ENCODE measurements at regions of chr12 and their contacts with region 1.

Region 1: DNA sequence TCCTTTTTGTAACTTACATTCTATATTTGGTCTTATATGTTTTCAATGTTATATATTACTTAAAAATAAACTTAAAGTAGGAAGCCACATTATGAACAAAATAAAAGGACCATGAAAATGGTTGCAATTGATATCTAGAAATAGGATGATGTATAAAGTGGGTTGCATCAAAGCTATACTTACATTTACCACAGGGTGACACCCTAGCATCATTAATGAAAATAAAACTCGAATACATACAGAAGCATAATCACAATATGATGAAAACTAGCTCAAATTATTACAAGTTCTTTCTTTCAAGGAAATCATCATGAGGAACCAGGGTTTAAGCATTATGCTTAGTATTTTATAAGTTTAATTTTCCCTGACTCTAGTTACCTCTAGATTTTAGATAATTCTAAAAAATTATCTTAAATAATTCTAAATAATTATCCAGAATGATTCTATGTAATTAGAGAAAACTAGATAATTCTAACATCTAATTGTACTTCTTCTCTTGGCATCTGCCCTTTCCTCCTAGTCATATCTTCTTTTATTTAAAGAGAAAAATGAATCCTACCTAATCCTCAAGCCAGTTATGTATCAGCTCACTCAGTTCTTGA is 31.2 kb downstream of the TAS2R7 start:
- DNase-seq: peak; percentile 56
- ATAC-seq: peak; percentile 46; the same call in 1 of the 2 replicates
- H3K4me3 ChIP-seq: no peak overlapping the region
- H3K27ac ChIP-seq: no peak overlapping the region
- H3K4me1 ChIP-seq: no peaks in the 10 kb centered on the region
- H3K27me3 ChIP-seq: peaks cover 71% of the 10 kb centered on the region
- CTCF ChIP-seq: peak; percentile 69

Region 2: DNA sequence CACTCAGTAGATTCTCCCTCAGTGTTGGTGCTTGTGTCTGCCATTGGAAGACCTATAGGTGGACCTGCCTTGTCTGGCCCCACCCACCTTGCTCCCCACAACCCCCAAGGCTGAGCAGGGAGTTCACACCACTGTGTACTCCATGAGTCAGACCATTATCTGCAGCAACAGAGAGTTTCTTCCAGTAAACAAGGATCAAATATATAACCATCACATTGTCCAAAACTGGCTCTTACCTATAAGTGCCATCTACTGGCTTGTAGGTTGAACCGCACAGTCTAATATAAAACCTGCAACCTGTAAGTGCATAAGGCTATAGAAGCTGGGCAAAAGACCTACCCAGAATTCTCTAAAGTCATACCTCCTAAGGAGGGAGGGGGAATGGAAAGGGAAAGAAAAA is 130.2 kb after region 1 on chr12:
- CTCF ChIA-PET with region 1: no interaction called
- POLR2A ChIA-PET with region 1: no interaction called
- intact Hi-C with region 1: loop called (anchors 2 kb)
- DNase-seq: peak; percentile 45
- ATAC-seq: peak; percentile 77
- H3K4me3 ChIP-seq: no peak overlapping the region
- H3K27ac ChIP-seq: no peak overlapping the region
- H3K4me1 ChIP-seq: no peaks in the 10 kb centered on the region
- H3K27me3 ChIP-seq: no peaks in the 10 kb centered on the region
- CTCF ChIP-seq: peak; percentile 57

Region 3: GRCh38 chr12:11202811-11203210 is 431.6 kb after region 1 on chr12:
- CTCF ChIA-PET with region 1: interaction called, 14 read pairs
- POLR2A ChIA-PET with region 1: interaction called, 5 read pairs
- intact Hi-C with region 1: loop called (anchors 1 kb)
- DNase-seq: no peak
- ATAC-seq: no peak
- H3K4me3 ChIP-seq: no peak overlapping the region
- H3K27ac ChIP-seq: no peak overlapping the region
- H3K4me1 ChIP-seq: no peaks in the 10 kb centered on the region
- H3K27me3 ChIP-seq: no peaks in the 10 kb centered on the region
- CTCF ChIP-seq: no peak

Region 4: DNA sequence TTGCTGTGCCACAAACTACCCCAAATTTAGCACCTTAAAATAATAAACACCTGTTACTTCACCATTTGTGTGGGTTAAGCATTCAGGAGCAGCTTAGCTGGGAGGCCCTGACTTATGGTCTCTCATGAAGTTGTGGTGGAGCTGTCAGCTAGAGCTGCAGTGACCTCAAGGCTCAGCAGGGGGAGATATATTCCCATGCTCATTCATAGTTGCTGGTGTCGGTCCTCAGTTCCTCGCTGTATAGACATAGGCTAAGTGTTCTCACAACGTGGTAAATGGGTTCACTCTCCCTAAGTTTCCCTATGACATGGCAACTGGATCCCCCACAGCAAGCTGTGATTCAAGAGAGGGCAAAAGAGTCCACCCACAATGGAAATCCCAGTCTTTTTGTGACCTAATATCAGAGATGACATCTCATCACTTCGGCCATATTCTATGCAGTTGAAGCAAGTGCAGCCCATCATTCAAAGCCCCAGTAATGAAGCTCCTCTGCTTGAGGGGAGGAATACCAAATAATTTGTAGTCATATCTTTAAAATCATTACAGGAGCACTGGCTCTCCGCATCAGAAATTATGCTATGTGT is 457.2 kb after region 1 on chr12:
- CTCF ChIA-PET with region 1: no interaction called
- POLR2A ChIA-PET with region 1: no interaction called
- intact Hi-C with region 1: loop called (anchors 2 kb)
- DNase-seq: peak; percentile 68
- ATAC-seq: peak; percentile 87
- H3K4me3 ChIP-seq: no peak overlapping the region
- H3K27ac ChIP-seq: no peak overlapping the region
- H3K4me1 ChIP-seq: no peaks in the 10 kb centered on the region
- H3K27me3 ChIP-seq: no peaks in the 10 kb centered on the region
- CTCF ChIP-seq: peak; percentile 78

Region 5: DNA sequence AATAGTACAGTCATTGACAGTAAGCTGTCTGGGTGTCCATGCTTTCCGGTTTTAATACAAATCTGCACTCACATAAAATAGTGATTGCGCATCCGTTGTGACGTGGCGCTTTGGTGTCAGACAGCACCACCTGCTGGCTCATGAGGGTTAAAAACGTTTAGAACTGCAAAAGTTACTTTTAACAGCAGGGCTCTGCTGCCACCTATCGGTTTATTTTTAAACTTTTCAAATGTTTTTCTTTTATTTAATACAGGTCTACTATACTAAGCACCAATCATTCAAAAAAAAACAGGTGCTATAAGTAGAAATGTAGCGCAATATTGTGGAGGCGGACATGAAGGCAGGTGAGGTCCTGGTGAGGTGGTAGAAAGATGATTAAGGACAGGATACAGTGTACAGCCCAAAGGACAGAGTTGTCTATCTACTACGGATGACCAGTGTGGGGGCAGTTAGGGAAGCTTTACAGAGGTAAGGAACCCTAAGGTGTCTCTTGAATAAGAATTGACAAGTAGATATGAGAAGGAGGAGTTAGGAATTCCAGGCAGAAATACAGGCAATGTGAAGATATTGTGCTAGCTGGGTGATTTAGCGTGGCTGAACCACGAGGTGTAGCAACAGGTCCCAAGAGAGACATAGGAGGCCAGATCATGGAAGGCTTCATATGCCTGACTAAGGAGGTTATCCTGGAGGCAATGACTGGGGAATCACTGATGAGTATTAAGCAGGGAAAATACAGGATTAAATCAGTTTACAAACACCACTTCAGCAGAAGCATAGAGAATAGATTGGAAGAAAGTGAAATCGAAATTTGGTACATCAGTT is 715.6 kb after region 1 on chr12:
- CTCF ChIA-PET with region 1: interaction called, 6 read pairs
- POLR2A ChIA-PET with region 1: no interaction called
- intact Hi-C with region 1: loop called (anchors 1 kb)
- DNase-seq: peak; percentile 86
- ATAC-seq: peak; percentile 44
- H3K4me3 ChIP-seq: no peak overlapping the region
- H3K27ac ChIP-seq: no peak overlapping the region
- H3K4me1 ChIP-seq: peaks cover 15% of the 10 kb centered on the region
- H3K27me3 ChIP-seq: no peaks in the 10 kb centered on the region
- CTCF ChIP-seq: peak; percentile 96

Region 6: DNA sequence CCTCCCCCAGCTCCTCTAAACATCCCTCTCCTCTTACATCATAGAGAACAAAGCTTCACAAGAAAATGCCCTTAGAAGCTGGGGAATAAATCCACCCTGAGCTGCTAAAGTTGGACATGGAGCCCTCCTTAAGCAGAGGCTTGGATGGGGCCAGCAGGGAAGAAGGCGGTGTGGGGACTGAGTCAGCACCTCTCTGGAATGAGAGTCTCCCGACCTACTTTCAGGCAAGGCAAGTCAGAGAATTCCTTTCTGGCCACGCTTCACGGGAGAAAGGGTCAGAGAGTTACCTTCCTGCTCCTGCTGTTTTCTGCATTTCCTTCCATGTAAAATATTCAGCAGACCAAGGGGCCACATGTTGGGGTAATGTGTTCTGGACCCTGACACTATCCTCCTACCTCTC is 737.5 kb after region 1 on chr12:
- CTCF ChIA-PET with region 1: interaction called, 7 read pairs
- POLR2A ChIA-PET with region 1: no interaction called
- intact Hi-C with region 1: loop called (anchors 5 kb)
- DNase-seq: peak; percentile 4
- ATAC-seq: no peak
- H3K4me3 ChIP-seq: no peak overlapping the region
- H3K27ac ChIP-seq: no peak overlapping the region
- H3K4me1 ChIP-seq: no peaks in the 10 kb centered on the region
- H3K27me3 ChIP-seq: no peaks in the 10 kb centered on the region
- CTCF ChIP-seq: no peak

Measured in PC-3 (cell line).